ENCODE measurements at regions of chr16 and their contacts with region 1.

Region 1: GRCh38 chr16:57899771-57900661 is 70.9 kb downstream of the CNGB1 start:
- DNase-seq: peak; percentile 76
- H3K4me3 ChIP-seq: no peak overlapping the region
- H3K27ac ChIP-seq: no peak overlapping the region
- H3K4me1 ChIP-seq: no peaks in the 10 kb centered on the region
- H3K27me3 ChIP-seq: peaks cover 35% of the 10 kb centered on the region
- CTCF ChIP-seq: peak; percentile 79 to 88 (median 83)
- EP300 ChIP-seq: no peak
- POLR2A ChIP-seq: no peak

Region 2: DNA sequence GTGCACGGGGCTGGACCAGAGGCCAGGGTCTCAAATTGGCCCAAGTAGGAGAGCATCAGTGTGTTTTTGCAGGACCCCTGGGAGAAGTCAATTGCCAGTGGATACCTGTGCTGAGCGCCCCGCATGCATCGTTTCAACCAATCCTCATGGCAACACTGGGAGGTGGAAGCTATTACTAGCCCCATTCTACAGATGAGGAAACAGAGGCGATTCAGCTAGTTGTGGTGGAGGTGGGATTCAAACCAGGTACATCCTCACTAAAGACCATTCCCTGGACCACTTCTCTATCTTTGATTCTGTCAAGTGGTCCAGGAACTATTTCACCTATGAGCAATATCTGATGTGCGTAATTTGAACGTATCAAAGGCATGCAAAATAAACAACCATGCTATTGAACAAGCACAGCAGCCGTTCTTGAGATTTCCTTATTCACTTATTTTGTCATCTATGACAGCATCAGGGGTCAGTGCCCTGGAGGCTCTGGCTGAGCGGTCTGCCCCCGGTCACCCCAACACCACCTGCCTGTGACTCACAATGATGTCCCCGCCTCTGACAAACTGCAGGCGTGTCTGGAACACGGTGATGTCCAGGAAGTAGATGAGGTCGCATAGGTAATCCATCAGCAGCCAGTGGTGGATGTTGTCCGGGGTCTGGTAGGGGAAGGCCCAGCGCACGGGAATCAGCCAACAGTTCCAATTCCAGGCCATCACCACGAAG is 16.9 kb after region 1 on chr16:
- in situ Hi-C with region 1: no loop called
- intact Hi-C with region 1: no loop called
- DNase-seq: no peak
- H3K4me3 ChIP-seq: no peak overlapping the region
- H3K27ac ChIP-seq: no peak overlapping the region
- H3K4me1 ChIP-seq: no peaks in the 10 kb centered on the region
- H3K27me3 ChIP-seq: no peaks in the 10 kb centered on the region
- CTCF ChIP-seq: no peak
- EP300 ChIP-seq: no peak
- POLR2A ChIP-seq: no peak

Region 3: DNA sequence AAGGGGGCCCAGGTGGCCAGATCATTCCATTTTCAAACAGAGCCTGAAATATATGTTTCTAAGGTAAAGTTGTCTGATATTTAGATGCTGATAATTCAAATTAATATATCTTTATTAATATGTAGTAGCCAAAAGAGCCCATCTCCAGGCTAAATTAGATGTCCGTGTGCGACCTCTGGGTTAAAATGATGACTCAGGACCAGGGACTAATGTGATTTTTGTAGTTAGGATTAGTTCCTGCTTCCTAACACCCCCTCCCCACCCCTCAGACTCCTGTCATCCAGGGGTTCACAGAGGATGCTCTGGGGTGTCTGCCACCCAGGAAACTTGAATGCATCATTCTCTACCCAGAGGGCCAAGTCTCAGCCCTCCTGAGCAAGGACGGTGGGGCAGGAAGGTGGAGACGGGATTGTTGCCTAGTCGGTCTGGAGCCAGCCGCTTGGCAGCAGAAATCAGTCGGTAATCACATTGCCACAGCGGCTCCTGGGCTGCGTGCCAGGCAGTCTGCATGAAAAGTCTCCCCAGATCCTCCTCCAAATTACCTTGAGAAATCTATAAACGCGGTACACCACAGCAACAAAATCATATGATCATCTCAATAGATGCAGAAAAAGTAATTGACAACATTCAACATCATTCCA is 41.1 kb after region 1 on chr16:
- in situ Hi-C with region 1: no loop called
- intact Hi-C with region 1: no loop called
- DNase-seq: peak; percentile 41
- H3K4me3 ChIP-seq: no peak overlapping the region
- H3K27ac ChIP-seq: no peak overlapping the region
- H3K4me1 ChIP-seq: peaks cover 0 to 10% (median 0%) of the 10 kb centered on the region in 4 donors
- H3K27me3 ChIP-seq: no peaks in the 10 kb centered on the region
- CTCF ChIP-seq: no peak
- EP300 ChIP-seq: no peak
- POLR2A ChIP-seq: no peak

Region 4: DNA sequence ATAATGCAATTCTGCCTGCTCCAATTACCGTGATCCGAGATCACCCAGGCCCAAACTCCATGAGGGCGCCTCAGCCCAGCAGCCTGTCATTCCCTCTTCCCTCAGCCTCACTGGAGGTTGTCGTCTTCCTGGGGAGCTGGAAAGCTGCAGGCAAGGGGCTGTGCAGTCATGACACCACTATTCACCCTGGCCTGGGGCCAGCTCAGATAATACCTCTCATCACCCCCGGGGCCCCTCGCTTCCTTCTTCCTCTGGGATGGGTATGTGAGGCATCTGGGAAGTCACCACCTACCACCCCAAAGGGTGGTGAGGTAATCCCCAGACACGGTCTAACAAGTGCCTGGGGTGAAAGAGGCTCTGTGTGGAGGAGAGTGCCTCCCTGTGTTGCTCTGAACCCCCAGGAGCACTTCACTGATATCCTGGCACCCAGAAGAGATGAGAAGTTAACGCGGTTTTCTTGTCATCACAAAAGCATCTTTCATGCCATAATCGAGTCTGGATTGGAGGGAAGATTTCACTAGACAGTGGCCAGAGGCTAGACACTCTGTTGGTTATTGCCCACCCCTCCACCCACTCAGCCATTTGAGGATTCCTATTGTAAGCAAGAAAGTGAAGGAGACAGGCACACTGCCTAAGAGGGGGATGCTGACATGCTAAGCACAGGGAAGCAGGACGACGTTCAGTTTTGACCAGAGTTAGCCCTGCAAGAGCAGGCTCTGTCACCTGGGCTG is 210.7 kb after region 1 on chr16:
- in situ Hi-C with region 1: loop called in 1 of 4 experiments (anchors 25 kb)
- intact Hi-C with region 1: no loop called
- DNase-seq: no peak
- H3K4me3 ChIP-seq: no peak overlapping the region
- H3K27ac ChIP-seq: no peak overlapping the region
- H3K4me1 ChIP-seq: peaks cover 0 to 3% (median 0%) of the 10 kb centered on the region in 4 donors
- H3K27me3 ChIP-seq: no peaks in the 10 kb centered on the region
- CTCF ChIP-seq: no peak
- EP300 ChIP-seq: no peak
- POLR2A ChIP-seq: no peak

Measured in transverse colon (tissue), 4 donors.